Cardiac septum (tissue), 1 donor: ENCODE measurements at regions of chr4 and their contacts with region 1.

Region 1: DNA sequence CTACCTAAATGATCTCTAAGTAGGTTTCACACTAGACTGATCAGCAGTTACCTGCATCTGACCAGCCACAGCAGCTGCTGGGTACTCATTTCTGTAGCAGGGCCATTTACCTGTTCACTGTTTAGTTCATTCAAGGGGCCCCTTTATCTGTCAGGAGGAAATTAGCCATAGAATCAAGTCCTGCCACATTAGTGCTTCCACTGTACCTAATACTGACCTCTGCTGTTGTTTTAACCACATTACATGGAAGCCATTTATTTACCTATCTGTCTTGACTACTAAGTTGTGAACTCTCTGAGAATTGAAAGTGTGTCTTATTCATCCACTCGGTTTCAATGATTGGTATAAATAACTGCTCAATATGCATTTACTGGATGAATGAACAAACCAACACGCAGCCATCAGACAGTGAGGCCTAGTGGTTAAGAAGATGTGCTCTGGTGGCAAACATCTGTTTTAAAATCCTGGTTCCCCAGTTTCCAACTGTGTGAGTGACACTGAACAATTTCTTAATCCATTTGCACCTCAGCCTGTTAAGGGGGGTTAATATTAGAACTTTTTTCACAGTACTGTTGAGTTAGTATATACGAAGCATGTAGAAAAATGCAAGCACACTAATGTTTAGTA is 30.0 kb upstream of the ANXA5 start:
- DNase-seq: no peak

Region 2: GRCh38 chr4:121484633-121485032 is 242.1 kb before region 1 on chr4:
- intact Hi-C with region 1: loop called (anchors 10 kb)
- DNase-seq: no peak